ENCODE measurements at regions of chr19 and their contacts with region 1.

Region 1: DNA sequence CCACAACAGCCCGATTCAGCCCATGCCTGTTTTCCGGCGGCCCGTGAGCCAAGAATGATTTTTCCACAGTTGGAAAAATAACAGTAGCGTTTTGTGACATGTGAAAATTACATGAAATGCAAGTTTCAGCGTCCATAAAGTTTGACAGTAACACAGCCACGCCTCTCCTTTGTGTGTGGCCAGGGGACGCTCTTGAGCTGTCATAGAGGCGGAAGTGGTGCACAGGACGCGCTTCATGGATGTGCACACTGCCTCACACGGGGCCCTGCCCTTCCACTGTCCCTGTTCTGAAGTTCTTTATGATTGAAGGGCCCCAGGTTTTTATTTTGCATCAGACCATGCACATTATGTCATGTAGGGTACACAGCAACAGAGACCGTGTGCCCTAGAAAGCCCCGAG is 12.4 kb upstream of the ELAVL1 start:
- DNase-seq: no peak

Region 2: DNA sequence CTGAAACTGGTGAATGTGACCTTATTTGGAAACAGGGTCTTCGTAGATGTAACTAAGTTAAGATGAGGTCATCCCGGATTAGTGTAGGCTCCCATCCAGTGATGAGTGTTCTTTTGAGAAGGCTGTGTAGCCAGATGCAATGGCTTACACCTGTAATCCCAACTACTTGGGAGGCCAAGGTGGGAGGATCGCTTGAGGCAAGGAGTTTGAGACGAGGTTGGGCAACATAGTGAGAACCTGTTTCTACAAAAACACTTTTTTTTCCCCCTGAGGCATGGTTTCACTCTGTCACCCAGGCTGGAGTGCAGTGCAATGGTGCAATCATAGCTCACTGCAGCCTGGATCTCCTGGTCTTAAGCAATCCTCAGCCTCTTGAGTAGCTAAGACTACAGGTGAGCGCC is 95.2 kb after region 1 on chr19:
- intact Hi-C with region 1: no loop called
- DNase-seq: peak; percentile 15

Region 3: DNA sequence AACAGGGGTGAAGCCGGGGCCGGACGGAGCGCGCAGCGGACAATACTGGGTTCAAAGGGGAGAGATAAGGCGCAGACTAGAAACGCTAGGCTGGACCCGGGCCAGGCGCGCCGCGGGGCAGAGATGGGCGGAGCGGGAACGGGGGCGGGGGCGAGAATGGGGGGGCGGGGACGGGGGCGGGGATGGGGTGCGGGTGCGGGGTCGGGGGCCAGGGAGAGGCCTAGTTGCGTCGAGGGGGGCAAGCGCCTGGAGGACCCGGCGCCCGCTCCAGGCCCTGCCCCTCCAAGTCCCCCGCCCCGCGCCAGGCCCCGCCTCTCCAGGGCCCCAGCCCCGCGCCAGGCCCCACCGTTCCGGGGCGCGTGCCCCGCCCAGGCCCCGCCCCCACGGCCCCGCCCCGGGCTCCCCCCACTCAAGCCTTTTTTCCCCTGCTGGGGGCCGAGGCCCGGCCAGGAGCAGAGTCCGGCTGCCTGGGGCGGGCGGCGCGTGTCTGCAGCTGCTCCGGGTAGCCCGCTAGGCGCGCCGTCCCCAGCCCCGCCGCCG is 191.2 kb after region 1 on chr19 and contains the start of gene CERS4:
- intact Hi-C with region 1: loop called in 1 of 2 experiments (anchors 5 kb)
- DNase-seq: peak; percentile 93
- total RNA-seq, gene CERS4: 23.2 to 28.8 TPM

Measured in posterior vena cava (tissue), 2 donors.